Posterior cingulate gyrus (tissue), 11 donors: ENCODE measurements at regions of chr21 and their contacts with region 1.

Region 1: DNA sequence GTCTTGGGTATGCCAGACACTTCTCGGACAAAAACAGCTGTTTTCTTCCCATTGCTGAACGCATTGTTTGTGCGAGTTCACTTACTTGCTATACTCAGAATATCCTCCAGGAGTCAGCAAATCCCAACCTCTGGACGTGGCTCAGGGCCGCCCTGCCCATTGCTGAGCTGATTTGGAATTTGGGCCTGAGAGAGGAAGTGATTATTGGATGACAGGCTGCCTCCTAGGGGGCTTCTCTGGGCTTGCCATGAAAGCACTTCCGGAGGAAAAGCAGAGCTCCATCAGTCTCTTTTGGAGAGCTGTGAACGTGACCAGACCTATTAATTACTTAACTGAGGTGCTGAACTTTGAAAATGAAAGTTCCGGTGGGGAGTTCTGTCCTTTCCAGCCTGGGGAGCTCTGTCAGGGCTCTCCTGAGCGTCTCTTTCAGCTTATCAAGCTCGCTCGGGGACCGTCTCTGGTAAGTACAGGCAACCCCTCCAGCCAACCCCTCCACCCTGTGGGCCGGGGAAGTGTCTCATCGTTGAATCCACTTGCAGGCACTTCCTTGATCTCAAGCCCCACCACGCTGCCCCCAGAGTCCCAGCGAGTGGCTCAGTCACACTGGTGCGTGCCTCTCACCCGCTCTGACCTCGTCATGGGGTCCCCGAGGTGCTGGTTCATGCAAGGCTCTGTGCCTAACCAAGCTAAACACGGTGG is 76.9 kb downstream of the CLIC6 start:
- DNase-seq: peak in 7 of 10 donors; percentile 31 to 91 (median 37)

Region 2: DNA sequence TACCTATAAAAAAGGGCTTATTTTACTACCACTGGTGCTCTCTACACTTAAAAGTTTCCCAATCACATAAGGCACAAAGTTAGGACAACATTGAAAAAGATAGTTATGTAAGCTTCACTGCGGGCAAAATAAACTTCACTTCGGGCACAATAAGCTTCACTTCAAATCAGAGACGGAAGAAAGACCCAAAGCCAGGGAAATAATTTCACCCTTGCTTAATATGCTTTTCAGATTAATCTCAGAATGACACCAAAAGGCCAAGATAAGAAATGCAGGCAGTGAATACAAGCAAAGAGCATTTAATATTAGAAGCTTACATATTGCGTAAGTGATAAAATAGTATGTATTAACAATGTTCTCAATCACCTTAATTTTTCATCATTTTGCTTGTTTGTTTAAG is 870.4 kb after region 1 on chr21:
- intact Hi-C with region 1: loop called (anchors 5 kb)
- DNase-seq: no peak

Region 3: GRCh38 chr21:35840197-35840799 is 1094.6 kb after region 1 on chr21:
- intact Hi-C with region 1: loop called (anchors 1 kb)
- DNase-seq: peak in 5 of 10 donors; percentile 22 to 45 (median 41)

Region 4: DNA sequence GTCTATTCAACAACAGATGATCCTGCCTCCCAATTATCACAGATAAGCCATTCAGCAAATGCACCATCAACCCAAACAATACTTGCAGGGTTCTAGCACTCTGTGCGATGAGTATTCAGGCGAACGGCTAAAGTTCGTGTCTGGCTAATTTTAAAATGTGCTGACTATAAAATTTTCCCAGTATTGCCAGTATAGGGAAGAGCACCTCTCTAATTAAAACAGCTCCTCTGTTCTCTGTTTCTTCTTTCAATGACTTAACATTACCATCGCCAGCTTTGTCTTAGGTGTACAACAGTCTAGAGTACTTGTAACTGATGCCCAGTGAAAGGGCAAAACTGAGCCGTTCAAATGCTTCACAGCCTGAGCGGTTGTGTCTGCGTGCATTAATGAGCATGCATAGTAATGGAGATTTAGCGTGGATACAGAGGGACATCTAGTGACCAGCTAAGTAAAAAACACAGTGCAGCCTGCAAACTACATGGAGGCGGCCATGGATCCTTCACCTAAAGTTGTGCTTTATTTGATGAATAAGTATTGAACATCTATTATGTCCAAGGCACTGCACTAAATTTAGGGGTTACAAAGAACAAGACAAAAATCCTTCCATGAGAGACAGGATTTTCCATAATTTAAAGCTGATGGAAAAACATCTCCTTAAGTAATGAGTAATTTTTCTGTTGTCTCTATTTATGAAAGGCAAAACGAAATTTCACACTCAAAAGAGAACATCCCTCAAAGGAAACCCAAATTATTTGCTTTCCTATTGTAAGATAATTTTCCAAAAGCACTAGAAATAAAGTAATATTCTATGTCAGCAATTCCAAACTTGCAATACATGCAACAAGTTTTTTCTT is 1194.6 kb after region 1 on chr21:
- intact Hi-C with region 1: loop called (anchors 2 kb)
- DNase-seq: peak in 8 of 10 donors; percentile 17 to 88 (median 32)